ENCODE measurements at regions of chr6 and their contacts with region 1.

Region 1: DNA sequence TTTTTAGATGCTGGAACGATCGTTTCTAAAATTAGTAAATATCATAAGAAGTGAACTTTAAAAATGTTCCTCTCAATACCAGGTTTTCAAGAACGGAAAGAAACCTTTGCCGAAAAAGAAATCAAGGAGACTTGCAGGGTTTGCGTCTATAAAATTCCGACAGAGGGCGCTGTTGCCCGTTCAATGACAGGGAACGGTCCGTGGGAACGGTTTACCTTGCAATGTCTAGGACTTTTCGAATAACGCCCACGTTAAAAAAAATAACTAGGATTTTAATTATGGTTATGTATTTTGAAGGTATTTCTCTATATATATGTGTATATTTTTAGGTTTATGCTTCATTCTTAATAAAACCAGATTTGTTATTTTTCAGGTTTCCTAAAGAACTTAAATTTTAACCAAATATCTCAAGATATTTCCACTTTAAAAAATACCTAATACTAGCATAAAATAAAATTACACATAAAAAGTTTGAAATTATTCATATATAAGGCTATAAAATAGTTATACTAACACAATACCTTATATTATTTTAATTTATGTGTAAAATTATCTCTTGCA is 2.5 kb upstream of the TFAP2B start:
- DNase-seq: peak; percentile 79
- H3K4me3 ChIP-seq: peak overlapping the region; percentile 20 to 69 (median 36)
- H3K27ac ChIP-seq: no peak overlapping the region
- H3K4me1 ChIP-seq: peaks cover 0 to 29% (median 18%) of the 10 kb centered on the region in 6 donors
- H3K27me3 ChIP-seq: peaks cover 0 to 93% (median 54%) of the 10 kb centered on the region in 7 donors
- CTCF ChIP-seq: peak; percentile 18 to 83 (median 66)
- POLR2A ChIP-seq: no peak

Region 2: DNA sequence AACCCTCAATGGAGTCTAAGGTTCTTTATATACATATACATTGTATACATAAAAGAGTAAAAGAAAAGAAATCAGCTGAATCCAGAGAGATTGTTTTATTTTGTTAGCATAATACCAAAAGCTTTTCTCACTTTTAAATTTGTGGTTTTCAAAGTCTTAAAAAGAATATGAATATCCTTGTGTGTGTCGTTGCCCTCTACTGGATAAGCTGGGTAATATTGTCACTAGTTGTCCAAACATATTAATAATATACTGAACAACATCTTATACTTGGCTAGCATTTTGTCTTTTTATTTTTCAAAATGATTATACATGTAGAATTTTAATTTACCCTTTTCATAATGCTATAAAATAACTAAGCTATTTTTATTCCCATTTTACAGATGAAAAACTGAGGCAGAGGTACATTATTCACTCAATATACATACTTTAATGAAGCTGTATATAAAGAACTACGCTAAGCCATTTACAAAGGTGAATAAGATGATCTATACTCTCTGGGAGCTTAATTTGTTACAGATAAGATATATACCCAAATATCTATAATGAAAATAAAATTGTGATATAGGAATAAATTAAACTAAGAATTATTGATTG is 534.2 kb after region 1 on chr6:
- intact Hi-C with region 1: loop called (anchors 5 kb)
- DNase-seq: no peak
- H3K4me3 ChIP-seq: no peak overlapping the region
- H3K27ac ChIP-seq: no peak overlapping the region
- H3K4me1 ChIP-seq: no peaks in the 10 kb centered on the region
- H3K27me3 ChIP-seq: peaks cover 0 to 4% (median 0%) of the 10 kb centered on the region in 7 donors
- CTCF ChIP-seq: peak in 3 of 11 experiments; percentile 15 to 32 (median 21)
- POLR2A ChIP-seq: no peak

Region 3: DNA sequence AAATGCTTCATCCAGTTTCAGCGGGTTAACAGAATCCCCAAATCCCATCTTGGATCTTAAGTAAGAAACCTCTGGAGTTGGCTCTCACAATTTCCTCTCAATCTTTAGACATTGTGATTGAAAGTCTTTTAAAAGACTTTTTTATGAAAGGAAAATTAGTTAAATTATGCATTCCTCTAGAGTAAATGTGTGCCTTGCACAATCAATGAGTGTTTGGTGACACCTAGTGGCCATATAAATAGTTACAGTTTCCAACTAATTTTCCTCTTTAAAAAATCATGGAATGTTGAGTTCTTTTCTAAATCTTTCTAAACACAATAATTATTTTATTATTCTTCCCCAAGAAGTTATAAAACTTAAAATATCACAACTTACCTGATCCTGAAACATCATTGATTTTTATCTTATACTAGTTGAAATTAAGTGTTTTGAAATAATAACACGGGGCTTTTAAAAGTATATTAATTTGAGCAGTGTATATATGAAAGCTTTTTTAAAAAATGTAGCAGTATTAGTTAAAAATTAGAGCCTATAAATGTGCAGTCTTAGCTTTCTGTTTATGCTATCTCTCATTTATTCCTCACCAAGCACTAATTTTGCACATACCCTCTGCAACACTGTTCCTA is 1204.9 kb after region 1 on chr6:
- intact Hi-C with region 1: loop called (anchors 10 kb)
- DNase-seq: no peak
- H3K4me3 ChIP-seq: no peak overlapping the region
- H3K27ac ChIP-seq: no peak overlapping the region
- H3K4me1 ChIP-seq: no peaks in the 10 kb centered on the region
- H3K27me3 ChIP-seq: peaks cover 0 to 10% (median 0%) of the 10 kb centered on the region in 7 donors
- CTCF ChIP-seq: peak in 10 of 11 experiments; percentile 30 to 74 (median 62)
- POLR2A ChIP-seq: no peak